ENCODE measurements at regions of chr12 and their contacts with region 1.

Region 1: GRCh38 chr12:121620328-121620891 is 5.9 kb upstream of the ORAI1 start:
- DNase-seq: no peak
- H3K4me3 ChIP-seq: no peak overlapping the region
- H3K27ac ChIP-seq: no peak overlapping the region
- H3K4me1 ChIP-seq: no peaks in the 10 kb centered on the region
- H3K27me3 ChIP-seq: no peaks in the 10 kb centered on the region
- CTCF ChIP-seq: no peak

Region 2: GRCh38 chr12:121579981-121580868 is 40.2 kb before region 1 on chr12:
- CTCF ChIA-PET with region 1: interaction called, 5 read pairs
- POLR2A ChIA-PET with region 1: interaction called, 14 read pairs
- intact Hi-C with region 1: loop called (anchors 5 kb)
- DNase-seq: peak in 1 of 2 experiments; percentile 54
- H3K4me3 ChIP-seq: peak overlapping the region; percentile 86
- H3K27ac ChIP-seq: no peak overlapping the region
- H3K4me1 ChIP-seq: peaks cover 39% of the 10 kb centered on the region
- H3K27me3 ChIP-seq: no peaks in the 10 kb centered on the region
- CTCF ChIP-seq: no peak

Region 3: DNA sequence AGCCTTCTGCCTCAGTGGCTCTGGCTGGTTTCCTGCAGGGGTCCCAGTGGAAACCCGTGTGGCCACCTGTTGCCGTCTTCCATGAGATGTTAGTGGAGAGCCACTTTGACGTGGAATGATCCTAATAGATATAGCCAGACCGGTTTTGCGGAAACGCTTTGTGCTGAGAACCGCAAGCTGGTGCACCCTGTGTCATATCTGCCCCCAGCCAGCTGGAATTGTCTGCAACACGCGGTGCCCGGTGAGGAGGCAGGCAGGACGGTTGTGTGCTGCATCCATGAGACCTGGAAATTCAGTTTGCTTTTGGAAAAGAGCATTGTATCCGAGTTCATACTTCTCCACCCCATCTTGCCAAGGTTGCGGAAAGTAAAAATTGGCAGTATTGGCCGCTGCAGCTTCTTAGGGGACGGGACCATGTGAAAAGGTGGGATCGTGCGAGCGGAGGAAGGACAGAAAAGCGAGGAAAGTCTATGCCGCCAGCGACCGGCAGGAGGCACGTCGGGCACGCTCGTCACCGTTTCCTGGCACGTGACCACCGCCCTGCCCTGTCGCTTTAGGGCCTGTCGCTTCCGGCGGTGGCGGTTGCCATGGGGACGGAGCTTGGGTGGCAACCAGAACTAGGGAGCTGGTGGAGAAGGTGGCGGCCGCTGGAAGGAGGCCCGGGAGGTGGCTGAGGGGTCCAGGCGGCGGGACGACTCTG is 297.7 kb after region 1 on chr12 and contains the start of gene CFAP251:
- CTCF ChIA-PET with region 1: no interaction called
- POLR2A ChIA-PET with region 1: no interaction called
- intact Hi-C with region 1: no loop called
- DNase-seq: peak in 1 of 2 experiments; percentile 77
- H3K4me3 ChIP-seq: no peak within 1 kb of the TSS
- H3K27ac ChIP-seq: no peak within 1 kb of the TSS
- H3K4me1 ChIP-seq: no peaks in the 10 kb centered on the region
- H3K27me3 ChIP-seq: no peaks in the 10 kb centered on the region
- CTCF ChIP-seq: no peak
- total RNA-seq, gene CFAP251: 3.7 and 4.3 TPM in 2 replicates

Region 4: GRCh38 chr12:122965851-122966722 is 1345.7 kb after region 1 on chr12 and contains the start of gene ABCB9:
- CTCF ChIA-PET with region 1: interaction called, 14 read pairs
- POLR2A ChIA-PET with region 1: no interaction called
- intact Hi-C with region 1: no loop called
- DNase-seq: peak; percentile 82 to 96
- H3K4me3 ChIP-seq: peak within 1 kb of the TSS; percentile 82
- H3K27ac ChIP-seq: no peak within 1 kb of the TSS
- H3K4me1 ChIP-seq: peaks cover 5% of the 10 kb centered on the region
- H3K27me3 ChIP-seq: no peaks in the 10 kb centered on the region
- CTCF ChIP-seq: no peak
- total RNA-seq, gene ABCB9: 11.4 and 13.0 TPM in 2 replicates

Measured in PC-9 (cell line).